ENCODE measurements at regions of chr21 and their contacts with region 1.

Region 1: GRCh38 chr21:29849735-29850176 is 90.0 kb downstream of the GRIK1 start:
- DNase-seq: peak; percentile 30
- ATAC-seq: peak; percentile 100
- H3K4me3 ChIP-seq: no peak overlapping the region
- H3K27ac ChIP-seq: no peak overlapping the region
- H3K4me1 ChIP-seq: no peaks in the 10 kb centered on the region
- H3K27me3 ChIP-seq: no peaks in the 10 kb centered on the region
- CTCF ChIP-seq: peak; percentile 82
- EP300 ChIP-seq: no peak
- POLR2A ChIP-seq: no peak
- RAD21 ChIP-seq: peak; percentile 46; the same call in 1 of the 2 replicates

Region 2: DNA sequence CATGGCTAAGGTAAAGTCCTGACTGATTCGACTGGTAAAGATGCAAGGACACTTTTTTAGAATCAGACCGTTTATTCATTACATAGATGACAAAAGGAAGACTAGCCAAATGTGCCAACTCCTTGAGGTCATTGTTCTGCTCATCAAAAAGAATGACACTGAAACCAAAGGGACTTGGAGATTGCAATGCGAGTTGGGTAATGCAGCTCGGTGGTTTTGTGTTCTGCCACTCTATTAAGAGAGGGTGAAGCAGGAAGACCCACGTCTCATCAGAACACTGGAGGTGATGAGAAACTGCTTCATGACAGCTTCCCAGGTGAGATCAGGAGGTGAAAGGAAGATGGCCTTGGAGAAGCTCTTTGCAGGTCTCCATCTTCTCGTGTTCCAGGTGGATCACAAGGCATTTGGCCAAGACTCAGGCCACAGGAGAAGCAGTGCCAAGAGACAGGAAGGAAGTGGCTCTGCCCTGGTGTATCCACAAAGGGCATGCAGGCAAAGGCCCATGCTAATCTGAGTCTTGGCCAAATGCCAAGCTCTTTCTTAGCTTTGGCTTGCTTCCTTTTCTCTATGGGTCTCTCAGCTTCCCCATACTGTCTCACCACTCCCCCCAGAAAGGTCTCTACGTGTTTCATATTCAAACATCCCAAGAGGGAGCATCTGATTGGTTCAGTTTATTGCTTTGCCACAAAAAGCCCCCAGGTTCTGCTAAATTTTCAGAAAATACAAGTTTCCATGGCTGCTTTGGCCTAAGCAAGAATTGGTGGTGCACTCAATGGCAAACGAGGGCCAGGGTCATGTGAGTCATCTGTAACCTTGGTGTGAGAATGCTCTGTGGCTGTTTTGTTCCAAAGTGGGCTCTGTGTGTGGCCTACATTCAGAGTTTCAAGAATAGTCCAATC is 770.6 kb before region 1 on chr21:
- CTCF ChIA-PET with region 1: no interaction called
- POLR2A ChIA-PET with region 1: no interaction called
- in situ Hi-C with region 1: loop called (anchors 25 kb)
- intact Hi-C with region 1: no loop called
- DNase-seq: no peak
- ATAC-seq: peak; percentile 78
- H3K4me3 ChIP-seq: no peak overlapping the region
- H3K27ac ChIP-seq: no peak overlapping the region
- H3K4me1 ChIP-seq: peaks cover 36% of the 10 kb centered on the region; the same call in 1 of the 2 replicates
- H3K27me3 ChIP-seq: no peaks in the 10 kb centered on the region; a peak in 1 of 5 replicates
- CTCF ChIP-seq: no peak
- EP300 ChIP-seq: no peak
- POLR2A ChIP-seq: no peak
- RAD21 ChIP-seq: no peak

Region 3: GRCh38 chr21:29372063-29372802 is 477.5 kb before region 1 on chr21:
- CTCF ChIA-PET with region 1: no interaction called
- POLR2A ChIA-PET with region 1: no interaction called
- in situ Hi-C with region 1: no loop called
- intact Hi-C with region 1: loop called (anchors 10 kb)
- DNase-seq: peak; percentile 78
- ATAC-seq: peak; percentile 94
- H3K4me3 ChIP-seq: no peak overlapping the region
- H3K27ac ChIP-seq: no peak overlapping the region
- H3K4me1 ChIP-seq: no peaks in the 10 kb centered on the region
- H3K27me3 ChIP-seq: no peaks in the 10 kb centered on the region
- CTCF ChIP-seq: peak; percentile 82
- EP300 ChIP-seq: no peak
- POLR2A ChIP-seq: no peak
- RAD21 ChIP-seq: peak; percentile 69

Region 4: DNA sequence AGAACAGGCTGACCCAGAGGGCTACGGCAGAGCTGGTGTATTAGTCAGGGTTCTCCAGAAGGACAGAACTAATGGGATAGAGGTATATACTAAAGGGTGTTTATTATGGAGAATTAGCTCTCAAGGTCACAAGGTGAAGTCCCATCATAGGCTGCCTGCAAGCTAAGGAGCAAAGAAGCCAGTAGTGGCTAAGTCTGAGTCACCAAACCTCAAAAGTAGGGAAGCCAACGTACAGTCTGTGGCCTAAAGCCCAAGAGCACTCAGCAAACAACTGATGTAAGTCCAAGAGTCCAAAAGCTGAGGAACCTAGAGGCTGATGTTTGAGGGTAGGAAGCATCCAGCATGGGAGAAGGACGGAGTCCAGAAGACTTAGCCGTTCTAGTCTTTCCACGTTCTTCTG is 371.8 kb before region 1 on chr21:
- CTCF ChIA-PET with region 1: interaction called, 5 read pairs
- POLR2A ChIA-PET with region 1: no interaction called
- in situ Hi-C with region 1: no loop called
- intact Hi-C with region 1: loop called (anchors 1 kb)
- DNase-seq: no peak
- ATAC-seq: no peak
- H3K4me3 ChIP-seq: no peak overlapping the region
- H3K27ac ChIP-seq: no peak overlapping the region
- H3K4me1 ChIP-seq: peaks cover 21% of the 10 kb centered on the region
- H3K27me3 ChIP-seq: no peaks in the 10 kb centered on the region
- CTCF ChIP-seq: no peak
- EP300 ChIP-seq: no peak
- POLR2A ChIP-seq: no peak
- RAD21 ChIP-seq: no peak

Region 5: GRCh38 chr21:29961291-29962027 is 111.7 kb after region 1 on chr21:
- CTCF ChIA-PET with region 1: no interaction called
- POLR2A ChIA-PET with region 1: no interaction called
- in situ Hi-C with region 1: no loop called
- intact Hi-C with region 1: no loop called
- DNase-seq: no peak
- ATAC-seq: no peak
- H3K4me3 ChIP-seq: no peak overlapping the region
- H3K27ac ChIP-seq: no peak overlapping the region
- H3K4me1 ChIP-seq: no peaks in the 10 kb centered on the region
- H3K27me3 ChIP-seq: no peaks in the 10 kb centered on the region
- CTCF ChIP-seq: no peak
- EP300 ChIP-seq: no peak
- POLR2A ChIP-seq: no peak
- RAD21 ChIP-seq: no peak